ENCODE measurements at regions of chr18 and their contacts with region 1.

Region 1: GRCh38 chr18:25503567-25504081 is 151.7 kb upstream of the ZNF521 start:
- DNase-seq: peak; percentile 57
- H3K4me3 ChIP-seq: peak overlapping the region; percentile 2 to 51 (median 26)
- H3K27ac ChIP-seq: peak overlapping the region in 3 of 4 donors; percentile 18 to 40 (median 40)
- H3K4me1 ChIP-seq: peaks cover 0 to 8% (median 0%) of the 10 kb centered on the region in 4 donors
- H3K27me3 ChIP-seq: no peaks in the 10 kb centered on the region
- CTCF ChIP-seq: no peak
- EP300 ChIP-seq: no peak
- POLR2A ChIP-seq: no peak

Region 2: DNA sequence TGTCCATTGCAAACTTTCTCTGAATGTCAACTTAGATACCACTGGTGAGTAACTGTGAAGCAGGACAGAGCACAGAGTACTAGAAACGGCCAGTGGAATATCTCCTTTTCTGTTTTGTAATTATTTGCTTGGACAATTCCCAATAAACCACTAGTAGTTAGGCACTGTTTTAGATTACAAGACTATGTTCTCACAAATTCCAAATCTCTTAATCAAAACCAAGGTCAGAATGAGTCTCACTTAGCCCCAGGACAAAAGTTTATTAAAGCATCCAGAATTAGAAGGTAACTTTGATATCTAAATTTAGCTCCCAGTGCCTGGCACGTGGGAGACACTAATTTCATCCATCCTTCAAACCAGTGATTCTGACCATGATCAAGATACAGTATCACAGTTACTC is 240.7 kb before region 1 on chr18:
- in situ Hi-C with region 1: no loop called
- intact Hi-C with region 1: no loop called
- DNase-seq: no peak
- H3K4me3 ChIP-seq: no peak overlapping the region
- H3K27ac ChIP-seq: no peak overlapping the region
- H3K4me1 ChIP-seq: no peaks in the 10 kb centered on the region
- H3K27me3 ChIP-seq: no peaks in the 10 kb centered on the region
- CTCF ChIP-seq: no peak
- EP300 ChIP-seq: no peak
- POLR2A ChIP-seq: no peak

Region 3: GRCh38 chr18:25604894-25605597 is 101.4 kb after region 1 on chr18:
- in situ Hi-C with region 1: loop called in 1 of 4 experiments (anchors 25 kb)
- intact Hi-C with region 1: no loop called
- DNase-seq: no peak
- H3K4me3 ChIP-seq: no peak overlapping the region
- H3K27ac ChIP-seq: no peak overlapping the region
- H3K4me1 ChIP-seq: no peaks in the 10 kb centered on the region
- H3K27me3 ChIP-seq: no peaks in the 10 kb centered on the region
- CTCF ChIP-seq: no peak
- EP300 ChIP-seq: no peak
- POLR2A ChIP-seq: no peak

Region 4: GRCh38 chr18:26286008-26286407 is 782.4 kb after region 1 on chr18:
- in situ Hi-C with region 1: no loop called
- intact Hi-C with region 1: no loop called
- DNase-seq: no peak
- H3K4me3 ChIP-seq: no peak overlapping the region
- H3K27ac ChIP-seq: no peak overlapping the region
- H3K4me1 ChIP-seq: no peaks in the 10 kb centered on the region
- H3K27me3 ChIP-seq: no peaks in the 10 kb centered on the region
- CTCF ChIP-seq: no peak
- EP300 ChIP-seq: no peak
- POLR2A ChIP-seq: no peak

Measured in transverse colon (tissue), 4 donors.